ENCODE measurements at regions of chr2 and their contacts with region 1.

Region 1: DNA sequence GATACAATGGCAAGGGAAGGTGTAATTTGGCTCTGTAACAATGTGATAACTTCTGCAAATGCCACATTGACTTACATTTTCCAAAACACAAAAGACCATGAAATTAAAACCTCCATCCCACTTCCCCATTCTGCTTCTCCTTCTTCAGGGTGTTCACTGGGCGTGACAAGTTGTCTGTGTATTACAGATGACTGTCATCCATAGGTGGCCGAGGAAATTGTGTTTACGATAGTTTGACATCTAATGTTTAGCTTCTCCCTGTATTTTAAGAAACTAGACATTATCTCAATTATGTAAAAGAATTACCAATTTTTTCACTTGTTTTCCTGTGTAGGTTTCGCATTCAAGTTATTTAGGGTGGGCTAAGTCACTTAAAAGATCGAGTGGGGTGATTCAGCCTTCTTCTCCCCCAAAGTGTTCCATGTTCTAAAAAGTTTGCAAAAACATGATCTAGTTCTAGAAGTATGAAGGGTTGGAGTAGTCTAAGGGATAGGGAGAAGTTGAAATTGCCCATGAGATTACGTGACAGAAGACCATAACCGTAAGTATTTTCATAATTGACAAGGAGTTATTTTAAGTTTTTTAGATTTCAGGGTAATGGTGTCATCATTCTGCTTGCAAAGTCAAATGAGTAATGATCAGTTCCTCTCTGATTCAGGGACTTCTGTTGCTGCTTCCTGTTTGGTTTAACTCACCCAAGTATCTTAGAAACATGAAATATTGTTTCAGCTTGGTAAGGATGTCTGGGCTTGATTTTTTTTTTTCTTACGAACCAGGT is 25.2 kb upstream of the CYTIP start:
- DNase-seq: no peak
- ATAC-seq: peak; percentile 79
- H3K4me3 Mint-ChIP-seq: peak overlapping the region; percentile 65
- H3K27ac Mint-ChIP-seq: peak overlapping the region; percentile 98
- H3K4me1 Mint-ChIP-seq: peaks cover 91% of the 10 kb centered on the region
- H3K27me3 Mint-ChIP-seq: no peaks in the 10 kb centered on the region

Region 2: GRCh38 chr2:157438863-157439823 is 30.0 kb before region 1 on chr2:
- CTCF ChIA-PET with region 1: interaction called, 10 read pairs
- DNase-seq: no peak
- ATAC-seq: peak; percentile 8
- H3K4me3 Mint-ChIP-seq: peak overlapping the region; percentile 100
- H3K27ac Mint-ChIP-seq: peak overlapping the region; percentile 98
- H3K4me1 Mint-ChIP-seq: peaks cover 29% of the 10 kb centered on the region
- H3K27me3 Mint-ChIP-seq: no peaks in the 10 kb centered on the region

Region 3: GRCh38 chr2:157447031-157447430 is 22.1 kb before region 1 on chr2:
- CTCF ChIA-PET with region 1: interaction called, 21 read pairs
- DNase-seq: no peak
- ATAC-seq: peak; percentile 51
- H3K4me3 Mint-ChIP-seq: peak overlapping the region; percentile 73
- H3K27ac Mint-ChIP-seq: peak overlapping the region; percentile 87
- H3K4me1 Mint-ChIP-seq: peaks cover 57% of the 10 kb centered on the region
- H3K27me3 Mint-ChIP-seq: no peaks in the 10 kb centered on the region

Region 4: GRCh38 chr2:157480182-157480961 is 11.3 kb after region 1 on chr2:
- CTCF ChIA-PET with region 1: interaction called, 13 read pairs
- DNase-seq: peak; percentile 83
- ATAC-seq: peak; percentile 71
- H3K4me3 Mint-ChIP-seq: peak overlapping the region; percentile 74
- H3K27ac Mint-ChIP-seq: peak overlapping the region; percentile 96
- H3K4me1 Mint-ChIP-seq: peaks cover 72% of the 10 kb centered on the region
- H3K27me3 Mint-ChIP-seq: no peaks in the 10 kb centered on the region

Region 5: GRCh38 chr2:158291544-158292180 is 822.5 kb after region 1 on chr2:
- CTCF ChIA-PET with region 1: no interaction called
- DNase-seq: no peak
- ATAC-seq: no peak
- H3K4me3 Mint-ChIP-seq: no peak overlapping the region
- H3K27ac Mint-ChIP-seq: no peak overlapping the region
- H3K4me1 Mint-ChIP-seq: no peaks in the 10 kb centered on the region
- H3K27me3 Mint-ChIP-seq: peaks cover 3% of the 10 kb centered on the region

Measured in activated CD8-positive, alpha-beta memory T cell treated with anti-CD3 and anti-CD28 coated beads, Interleukin-2, amount 10 ng/mL, durations not matched to agents 7 days and 5 days (primary cell).